A673 (cell line): ENCODE measurements at regions of chr4 and their contacts with region 1.

Region 1: DNA sequence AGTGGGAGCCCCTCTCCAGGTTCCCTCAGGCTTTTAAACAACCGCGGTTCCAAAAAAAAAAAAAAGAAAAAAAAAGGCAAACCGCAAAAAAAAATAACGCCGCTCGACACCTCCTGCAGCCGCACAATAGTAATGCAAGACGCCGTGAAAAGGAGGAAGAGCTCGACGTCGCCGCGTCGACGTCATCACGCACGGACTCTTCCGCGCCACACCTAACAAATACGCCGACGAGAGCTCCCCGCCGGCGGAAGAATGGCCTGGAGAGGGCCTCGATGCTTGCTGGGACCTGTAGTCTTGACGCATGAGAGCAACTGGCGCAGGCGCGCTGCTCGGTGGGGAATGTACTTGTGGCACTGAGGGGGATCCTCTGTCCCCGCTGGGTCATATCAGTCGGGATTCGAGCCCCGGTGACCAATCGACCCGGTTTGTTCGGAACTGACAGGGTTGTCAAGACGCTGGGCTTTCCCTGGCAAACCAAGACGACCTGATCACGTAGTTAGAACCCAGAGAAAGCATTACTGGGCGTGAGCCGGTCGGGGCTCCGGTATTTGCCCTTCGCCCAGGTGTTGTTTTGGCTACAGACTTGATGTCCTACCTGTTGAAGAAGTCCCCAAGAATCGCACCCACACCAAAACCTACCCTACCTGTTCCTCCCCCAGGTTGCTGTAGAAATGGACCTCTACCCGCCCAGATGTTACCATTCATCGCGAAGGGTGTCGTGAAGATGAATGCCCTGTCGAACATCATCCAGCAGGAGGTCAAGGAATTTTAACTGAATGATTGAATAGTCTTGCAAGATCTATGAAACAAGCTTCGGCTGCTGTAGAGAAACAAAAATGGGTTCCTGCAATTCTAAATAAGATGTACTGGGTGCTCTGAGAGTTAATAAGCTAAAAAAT is at the start of gene CBR4:
- DNase-seq: peak; percentile 99
- H3K4me3 ChIP-seq: peak within 1 kb of the TSS; percentile 77
- H3K27ac ChIP-seq: peak within 1 kb of the TSS; percentile 93
- H3K4me1 ChIP-seq: peaks cover 9% of the 10 kb centered on the region
- H3K27me3 ChIP-seq: no peaks in the 10 kb centered on the region
- CTCF ChIP-seq: peak; percentile 12; the same call in 1 of the 2 replicates
- total RNA-seq, gene CBR4: 31.4 and 31.6 TPM in 2 replicates

Region 2: GRCh38 chr4:168361365-168362024 is 648.9 kb before region 1 on chr4:
- CTCF ChIA-PET with region 1: interaction called, 10 read pairs
- POLR2A ChIA-PET with region 1: no interaction called
- intact Hi-C with region 1: no loop called
- DNase-seq: peak; percentile 2
- H3K4me3 ChIP-seq: no peak overlapping the region
- H3K27ac ChIP-seq: no peak overlapping the region
- H3K4me1 ChIP-seq: no peaks in the 10 kb centered on the region
- H3K27me3 ChIP-seq: no peaks in the 10 kb centered on the region
- CTCF ChIP-seq: no peak

Region 3: GRCh38 chr4:168514249-168514852 is 496.0 kb before region 1 on chr4:
- CTCF ChIA-PET with region 1: interaction called, 3 read pairs
- POLR2A ChIA-PET with region 1: no interaction called
- intact Hi-C with region 1: loop called (anchors 5 kb)
- DNase-seq: peak; percentile 67
- H3K4me3 ChIP-seq: no peak overlapping the region
- H3K27ac ChIP-seq: no peak overlapping the region
- H3K4me1 ChIP-seq: peaks cover 4% of the 10 kb centered on the region
- H3K27me3 ChIP-seq: no peaks in the 10 kb centered on the region
- CTCF ChIP-seq: peak; percentile 65

Region 4: DNA sequence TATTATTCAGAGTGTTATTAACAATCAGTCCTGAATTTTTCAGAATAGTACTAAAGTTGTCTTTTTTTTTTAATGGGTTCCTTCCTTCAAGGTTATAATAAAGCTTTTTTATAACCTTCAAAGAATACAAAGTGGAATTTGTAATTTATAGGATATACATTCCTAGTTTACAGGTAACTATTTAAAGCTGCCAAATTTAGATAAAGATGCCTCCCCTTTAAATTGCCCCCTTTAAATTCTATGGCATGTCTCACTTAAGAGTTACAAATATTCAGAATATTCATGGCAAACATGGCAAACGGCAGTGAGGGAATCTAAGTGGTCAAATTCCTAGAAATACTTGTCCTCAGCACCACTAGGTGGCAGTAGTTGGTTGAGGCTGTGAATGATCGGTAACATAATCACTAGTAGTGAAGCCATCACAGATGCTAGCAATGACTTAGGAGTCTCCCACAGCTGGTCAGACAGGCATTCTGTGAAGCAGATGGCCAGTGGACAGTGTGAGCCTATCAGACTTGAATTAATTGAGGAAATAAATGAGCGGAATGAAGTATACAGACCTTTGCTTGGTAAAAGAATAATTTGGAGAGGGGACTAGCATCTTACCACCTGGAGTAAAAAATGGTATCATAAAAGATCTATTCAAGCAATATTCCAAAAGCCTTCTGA is 86.7 kb before region 1 on chr4:
- CTCF ChIA-PET with region 1: interaction called, 5 read pairs
- POLR2A ChIA-PET with region 1: no interaction called
- intact Hi-C with region 1: loop called (anchors 1 kb)
- DNase-seq: peak; percentile 83
- H3K4me3 ChIP-seq: no peak overlapping the region
- H3K27ac ChIP-seq: no peak overlapping the region
- H3K4me1 ChIP-seq: no peaks in the 10 kb centered on the region
- H3K27me3 ChIP-seq: no peaks in the 10 kb centered on the region
- CTCF ChIP-seq: peak; percentile 80

Region 5: DNA sequence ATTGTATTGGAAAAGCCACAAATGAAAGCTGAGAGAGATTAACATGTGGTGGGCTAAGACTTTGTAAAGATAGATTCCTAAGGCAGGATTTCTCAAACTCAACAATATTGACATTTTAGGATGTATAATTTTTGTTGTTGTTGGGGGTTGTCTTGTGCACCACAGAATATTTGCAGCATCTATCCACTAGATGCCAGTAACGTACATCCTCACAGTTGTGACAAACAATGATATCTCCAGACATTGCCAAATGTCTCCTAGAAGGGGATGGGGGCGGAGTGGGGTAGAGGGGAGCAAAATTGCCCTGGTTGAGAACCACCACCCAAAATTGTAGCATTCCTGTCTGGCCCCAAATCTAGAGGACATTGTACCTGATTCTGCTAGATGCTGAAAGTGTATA is 14.4 kb after region 1 on chr4:
- CTCF ChIA-PET with region 1: no interaction called
- POLR2A ChIA-PET with region 1: interaction called, 11 read pairs
- intact Hi-C with region 1: no loop called
- DNase-seq: peak; percentile 67
- H3K4me3 ChIP-seq: no peak overlapping the region
- H3K27ac ChIP-seq: no peak overlapping the region
- H3K4me1 ChIP-seq: no peaks in the 10 kb centered on the region
- H3K27me3 ChIP-seq: no peaks in the 10 kb centered on the region
- CTCF ChIP-seq: peak; percentile 74

Region 6: DNA sequence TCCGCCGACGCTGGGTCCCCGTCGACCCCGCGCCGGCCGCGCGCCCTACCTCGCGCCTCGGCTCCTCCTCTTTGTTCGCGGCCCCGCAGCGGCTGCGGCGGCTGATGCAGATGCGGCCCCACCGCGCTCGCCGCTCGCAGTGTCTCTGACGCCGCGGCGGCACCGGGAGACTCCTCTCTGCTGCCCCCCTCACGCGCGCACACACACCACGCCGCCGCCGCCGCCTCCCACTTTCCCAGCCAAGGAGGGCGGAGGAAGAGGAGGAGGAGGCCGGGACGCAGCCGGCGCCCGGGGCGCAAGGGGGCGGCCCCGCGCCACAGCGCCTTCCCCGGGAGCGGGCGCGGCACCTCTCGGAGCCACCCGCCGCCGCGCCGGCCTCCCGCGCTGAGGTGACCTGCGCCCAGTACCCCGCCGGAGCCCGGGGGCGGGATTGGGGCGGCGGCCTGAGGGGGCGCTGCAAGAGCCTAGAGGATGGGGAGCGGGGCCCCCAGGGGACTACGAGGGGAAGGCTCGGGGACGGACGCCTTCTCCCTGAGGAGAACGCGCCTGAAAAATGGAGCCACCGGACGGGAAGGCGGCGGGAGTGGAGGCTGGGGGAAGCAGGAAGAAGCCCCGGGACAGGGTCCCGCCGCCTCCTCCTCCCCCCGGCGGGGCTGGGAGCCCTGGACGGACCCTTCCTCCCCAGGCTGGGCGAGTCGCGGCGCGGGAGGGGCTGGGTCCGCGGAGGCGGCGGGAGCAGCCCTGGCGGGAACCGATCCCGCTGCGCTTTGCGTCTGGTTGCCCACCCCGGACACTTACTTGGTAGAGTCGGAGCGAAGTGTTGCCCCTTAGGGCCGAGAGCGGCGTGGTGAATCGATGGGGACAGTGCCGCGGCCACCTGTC is 260.7 kb after region 1 on chr4 and contains the start of gene SH3RF1:
- CTCF ChIA-PET with region 1: interaction called, 4 read pairs
- POLR2A ChIA-PET with region 1: no interaction called
- intact Hi-C with region 1: loop called (anchors 5 kb)
- DNase-seq: peak; percentile 93
- H3K4me3 ChIP-seq: peak within 1 kb of the TSS; percentile 86
- H3K27ac ChIP-seq: peak within 1 kb of the TSS; percentile 90
- H3K4me1 ChIP-seq: peaks cover 28% of the 10 kb centered on the region
- H3K27me3 ChIP-seq: no peaks in the 10 kb centered on the region
- CTCF ChIP-seq: peak; percentile 41
- total RNA-seq, gene SH3RF1: 15.3 and 15.4 TPM in 2 replicates

Region 7: DNA sequence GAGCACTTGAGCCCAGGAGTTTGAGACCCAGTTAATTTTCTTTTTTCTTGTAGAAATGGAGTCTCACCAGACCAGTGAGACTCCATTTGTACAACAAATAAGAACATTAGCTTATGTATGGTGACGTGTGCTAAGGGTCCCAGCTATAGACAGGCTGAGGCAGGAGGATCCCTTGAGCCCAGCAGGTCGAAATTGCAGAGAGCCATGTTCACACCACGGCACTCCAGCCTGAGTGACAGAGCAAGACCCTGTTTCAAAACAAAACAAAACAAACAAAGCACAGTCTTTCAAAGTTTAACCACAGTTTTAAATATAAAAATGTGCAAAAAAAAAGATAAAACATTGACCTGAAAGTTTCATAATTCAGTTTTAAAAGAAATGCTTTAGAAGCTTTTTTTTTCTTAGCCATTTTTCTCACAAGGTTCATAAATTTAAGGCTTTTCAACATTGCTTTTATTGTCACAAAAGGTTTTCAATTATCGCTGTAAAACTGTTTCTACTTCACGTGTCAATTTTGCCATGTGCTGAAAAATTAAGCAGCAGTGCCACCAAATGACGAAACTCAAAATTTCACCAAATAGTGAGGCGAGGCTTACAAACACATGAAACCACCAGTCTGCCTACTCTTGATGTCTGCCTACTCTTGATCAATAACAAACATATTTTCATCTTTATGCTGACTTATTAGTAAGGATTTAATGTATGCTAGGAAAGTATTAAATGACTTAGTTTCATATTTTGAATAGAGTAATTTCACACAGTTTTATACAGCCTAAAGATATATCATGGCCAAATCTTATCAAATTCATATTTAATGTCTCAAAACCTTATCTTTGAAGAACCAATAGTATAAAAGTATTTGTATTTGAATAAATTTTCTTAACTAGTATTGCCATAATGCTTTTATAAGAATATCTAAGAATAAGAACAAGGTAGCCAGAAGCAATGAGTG is 475.7 kb after region 1 on chr4:
- CTCF ChIA-PET with region 1: interaction called, 3 read pairs
- POLR2A ChIA-PET with region 1: no interaction called
- intact Hi-C with region 1: loop called (anchors 5 kb)
- DNase-seq: peak; percentile 76
- H3K4me3 ChIP-seq: no peak overlapping the region
- H3K27ac ChIP-seq: no peak overlapping the region
- H3K4me1 ChIP-seq: no peaks in the 10 kb centered on the region
- H3K27me3 ChIP-seq: no peaks in the 10 kb centered on the region
- CTCF ChIP-seq: peak; percentile 73